Activated B cell treated with CpG ODN at 0.5 μM for 24 hours (primary cell): ENCODE measurements at regions of chr4 and their contacts with region 1.

Region 1: DNA sequence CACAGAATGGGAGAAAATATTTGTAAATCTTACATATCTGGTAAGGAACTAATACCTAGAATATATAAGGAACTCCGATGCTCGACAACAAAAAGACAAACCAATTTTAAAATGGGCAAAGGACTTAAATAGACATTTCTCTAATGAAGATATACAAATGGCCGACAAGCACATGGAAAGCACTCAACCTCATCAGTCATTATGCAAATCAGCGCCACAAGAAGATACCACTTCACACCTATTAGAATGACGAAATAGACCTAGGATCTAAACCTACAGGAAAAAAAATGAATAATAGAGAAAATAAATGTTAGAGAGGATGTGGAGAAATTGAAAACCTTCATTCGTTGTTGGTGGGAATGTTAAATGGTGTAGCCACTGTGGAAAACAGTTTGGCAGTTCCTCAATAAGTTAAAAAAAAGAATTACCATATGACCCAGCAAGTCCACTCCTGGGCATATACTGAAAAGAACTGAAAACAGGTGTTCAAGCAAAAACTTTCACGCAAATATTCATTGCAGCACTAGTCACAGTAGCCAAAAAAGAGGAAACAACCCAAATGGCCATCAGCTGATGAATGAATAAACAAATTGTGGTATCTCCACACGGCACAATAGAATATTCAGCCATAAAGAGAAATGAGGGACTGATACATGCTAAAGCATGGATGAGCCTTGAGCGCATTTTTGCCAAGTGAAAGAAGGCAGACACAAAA is 57.3 kb upstream of the WDR19 start:
- DNase-seq: no peak
- ATAC-seq: peak; percentile 90
- H3K4me3 Mint-ChIP-seq: peak overlapping the region; percentile 2
- H3K27ac Mint-ChIP-seq: peak overlapping the region; percentile 78
- H3K4me1 Mint-ChIP-seq: peaks cover 27% of the 10 kb centered on the region
- H3K27me3 Mint-ChIP-seq: no peaks in the 10 kb centered on the region
- CTCF ChIP-seq: no peak

Region 2: GRCh38 chr4:39106011-39106410 is 19.0 kb before region 1 on chr4:
- CTCF ChIA-PET with region 1: no interaction called
- POLR2A ChIA-PET with region 1: interaction called, 5 read pairs
- intact Hi-C with region 1: loop called (anchors 2 kb)
- DNase-seq: no peak
- ATAC-seq: no peak
- H3K4me3 Mint-ChIP-seq: no peak overlapping the region
- H3K27ac Mint-ChIP-seq: no peak overlapping the region
- H3K4me1 Mint-ChIP-seq: no peaks in the 10 kb centered on the region
- H3K27me3 Mint-ChIP-seq: no peaks in the 10 kb centered on the region
- CTCF ChIP-seq: no peak